Left ventricle myocardium superior (tissue), 1 donor: ENCODE measurements at regions of chr6 and their contacts with region 1.

Region 1: DNA sequence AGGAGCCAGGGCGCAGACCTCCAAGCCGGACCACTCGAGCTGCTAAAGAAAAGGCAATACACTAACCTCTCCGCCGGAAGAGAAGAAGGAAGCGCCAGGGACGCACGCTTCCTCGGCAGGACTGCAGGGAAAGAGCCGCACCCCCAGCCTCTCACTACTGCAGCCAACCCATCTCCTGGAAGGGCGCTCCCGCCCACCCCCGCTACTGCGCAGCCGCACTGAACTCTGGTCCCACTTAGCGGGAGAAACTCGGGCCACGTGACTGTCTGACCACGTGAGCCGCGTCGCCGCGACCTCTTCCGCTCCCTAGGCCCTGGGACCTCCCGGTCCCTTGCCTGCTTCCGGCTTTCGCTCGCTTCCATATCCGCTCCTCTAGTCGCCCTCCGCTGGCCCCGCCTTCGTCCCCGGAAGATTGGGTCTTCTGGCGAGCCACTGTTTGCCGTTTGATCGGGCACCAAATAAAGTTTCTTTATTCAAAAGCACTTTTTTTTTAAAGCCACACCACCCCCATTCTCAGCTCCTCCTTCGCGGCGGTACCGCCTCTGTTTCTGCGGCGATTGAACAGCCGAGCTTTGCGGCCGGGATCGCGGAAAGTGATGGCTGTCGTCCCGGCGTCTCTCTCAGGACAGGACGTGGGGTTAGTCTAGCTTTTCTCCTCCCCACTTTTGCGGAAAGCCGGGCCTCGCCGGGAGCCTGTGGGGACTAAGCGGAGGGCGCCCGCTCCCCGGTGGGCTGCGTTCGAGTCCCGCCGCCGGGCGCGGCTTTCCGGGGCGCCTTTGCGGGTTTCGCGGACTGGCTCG is at the start of gene RMND1:
- DNase-seq: peak; percentile 100
- ATAC-seq: peak; percentile 99
- total RNA-seq, gene RMND1: 18.7 TPM

Region 2: DNA sequence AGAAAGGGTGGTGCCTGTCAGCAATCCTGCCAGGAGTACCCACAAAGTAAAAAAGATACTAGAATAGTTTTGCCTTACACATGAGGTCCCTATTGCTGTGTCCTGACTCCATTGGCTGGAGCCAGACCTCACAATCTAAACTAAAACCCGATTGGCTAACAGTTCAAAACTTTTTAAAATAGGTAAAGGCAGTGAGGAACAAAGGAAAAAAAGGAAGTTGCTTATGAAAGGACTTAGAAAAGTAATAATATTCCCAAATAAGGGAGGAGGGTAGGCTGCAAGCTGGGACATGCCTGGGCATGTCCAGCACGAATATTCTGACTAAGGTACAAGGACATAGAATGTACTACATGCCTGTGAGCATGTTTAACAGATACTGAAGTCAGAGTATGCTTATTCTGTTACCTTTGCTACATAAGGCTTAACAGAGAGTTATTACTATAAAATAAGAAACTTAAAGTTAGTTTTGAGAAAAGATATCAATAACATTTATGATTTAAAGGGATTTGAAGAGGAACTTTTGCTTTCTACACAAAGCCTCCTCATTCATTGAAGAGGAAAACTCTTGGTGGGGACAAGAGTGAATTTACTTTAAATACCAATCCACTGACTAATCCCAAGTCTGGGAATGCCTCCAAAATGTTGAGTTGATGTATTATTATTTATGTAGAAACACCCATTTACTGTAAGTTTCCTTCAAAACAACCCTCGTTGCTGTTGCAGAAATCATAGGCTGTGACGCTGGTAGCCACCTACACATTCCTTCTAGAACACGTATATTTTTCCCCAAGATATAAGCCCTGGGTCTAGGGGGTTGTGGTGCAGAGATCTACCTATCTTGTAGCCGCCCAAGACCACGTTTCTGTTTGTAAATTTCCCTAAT is 594.8 kb before region 1 on chr6:
- intact Hi-C with region 1: no loop called
- DNase-seq: no peak
- ATAC-seq: peak; percentile 44

Region 3: GRCh38 chr6:151276112-151276745 is 175.9 kb before region 1 on chr6:
- intact Hi-C with region 1: no loop called
- DNase-seq: peak; percentile 57
- ATAC-seq: peak; percentile 86

Region 4: DNA sequence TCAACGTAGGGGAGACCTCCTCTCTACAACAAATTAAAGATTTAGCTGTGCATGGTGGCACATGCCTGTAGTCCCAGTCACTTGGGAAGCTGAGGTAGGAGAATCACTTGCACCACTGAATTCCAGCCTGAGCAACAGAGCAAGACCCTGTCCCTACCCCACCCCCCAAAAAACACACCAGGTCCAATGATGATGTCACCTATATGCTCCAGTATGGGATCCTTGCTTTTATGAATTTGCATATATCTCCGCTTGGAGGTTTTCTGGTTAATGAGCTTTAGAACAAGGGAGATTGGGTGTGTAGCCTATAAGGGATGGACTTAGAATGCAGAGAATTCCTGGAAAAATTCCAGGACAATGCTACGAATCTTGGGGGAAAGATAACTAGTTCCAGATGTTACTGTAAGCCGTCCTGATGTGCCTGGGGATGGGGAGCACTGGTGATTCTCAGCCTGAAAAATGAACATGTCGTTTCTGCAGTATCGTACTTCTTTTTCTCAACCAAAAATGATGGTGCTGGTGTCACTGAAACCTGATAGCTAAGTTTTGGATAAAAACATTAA is 121.9 kb before region 1 on chr6:
- intact Hi-C with region 1: no loop called
- DNase-seq: no peak
- ATAC-seq: no peak

Region 5: GRCh38 chr6:151349651-151350282 is 102.4 kb before region 1 on chr6:
- intact Hi-C with region 1: no loop called
- DNase-seq: no peak
- ATAC-seq: no peak

Region 6: GRCh38 chr6:151390276-151391032 is 61.7 kb before region 1 on chr6:
- intact Hi-C with region 1: loop called (anchors 5 kb)
- DNase-seq: peak; percentile 99
- ATAC-seq: peak; percentile 87